HEK293T (cell line): ENCODE measurements at regions of chr9 and their contacts with region 1.

Region 1: DNA sequence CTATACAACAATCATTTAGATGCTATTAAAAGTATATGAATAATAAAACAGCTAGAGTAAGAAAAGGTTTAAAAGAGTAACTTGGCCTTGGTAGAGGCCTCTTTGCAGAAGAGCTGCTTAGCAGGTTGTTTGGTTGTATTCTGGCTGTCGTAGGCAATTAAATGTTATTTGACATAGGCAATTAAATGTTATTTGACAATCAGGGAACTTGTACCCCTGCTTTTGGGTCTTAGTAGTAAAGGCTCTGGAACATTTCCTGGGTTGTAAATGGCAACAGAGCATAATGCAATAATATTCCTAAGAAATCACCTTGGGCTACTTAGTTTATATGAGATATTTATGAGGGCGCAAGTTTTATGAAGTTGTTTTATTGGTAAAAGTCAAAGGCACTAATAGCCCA is 84.4 kb upstream of the SLC28A3 start:
- DNase-seq: no peak

Region 2: DNA sequence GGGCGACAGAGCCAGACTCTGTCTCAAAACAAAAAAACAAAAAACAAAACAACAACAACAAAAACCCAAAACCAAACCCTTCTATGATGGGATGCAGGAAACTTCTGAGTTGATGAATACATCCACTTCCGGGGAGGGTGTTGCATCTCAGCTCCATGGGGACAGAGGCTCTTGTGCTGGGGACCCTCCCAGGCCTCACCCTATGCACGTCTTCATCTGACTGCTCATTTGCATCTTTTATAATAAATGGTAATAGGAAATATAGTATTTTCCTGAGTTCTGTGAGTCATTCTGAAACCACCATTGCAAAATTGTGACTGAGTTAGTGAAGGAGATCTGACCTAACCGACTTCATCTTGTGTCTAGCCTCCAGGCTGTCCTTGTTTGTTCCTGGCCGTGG is 25.1 kb after region 1 on chr9:
- CTCF ChIA-PET with region 1: interaction called, 10 read pairs
- POLR2A ChIA-PET with region 1: no interaction called
- DNase-seq: no peak